IMR-90 (cell line): ENCODE measurements at regions of chr6 and their contacts with region 1.

Region 1: DNA sequence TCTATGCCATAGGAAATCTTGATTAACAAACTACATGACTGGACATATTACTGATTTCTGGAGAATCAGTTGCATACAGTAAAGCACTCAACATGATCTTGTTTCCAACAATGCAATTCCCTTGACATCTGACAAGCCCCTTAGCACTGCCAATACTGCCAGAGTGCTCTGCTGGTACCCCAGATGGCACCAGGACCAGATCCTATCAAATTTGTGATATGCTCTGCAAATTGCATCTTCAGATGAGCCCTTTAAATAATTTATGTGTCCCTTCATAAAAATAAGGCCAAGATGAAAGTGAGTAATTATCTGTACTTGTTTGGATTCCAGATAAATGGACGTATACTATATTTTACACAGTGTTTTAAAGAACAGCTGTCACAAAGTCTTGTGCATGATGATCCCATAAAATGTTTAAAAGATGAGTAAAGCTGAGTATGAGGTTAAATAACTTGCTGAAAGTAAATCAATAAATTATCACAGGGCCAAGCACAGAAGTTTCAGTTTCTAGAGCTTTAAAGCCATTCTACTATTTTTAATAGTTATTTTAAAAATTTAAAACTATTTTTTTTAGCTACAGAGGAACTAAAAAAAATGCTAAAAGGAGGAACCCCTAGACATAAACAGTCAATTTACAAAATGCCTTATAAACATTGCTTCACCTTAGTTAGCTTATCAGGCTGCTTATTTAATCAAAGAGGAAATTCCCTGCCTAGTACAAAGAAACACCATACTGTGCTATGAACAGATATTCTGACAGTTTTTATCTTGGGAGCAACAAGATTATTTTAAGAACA is 42.1 kb downstream of the NUDT3 start:
- DNase-seq: peak; percentile 31
- ATAC-seq: peak; percentile 49; the same call in 1 of the 2 replicates
- H3K4me3 ChIP-seq: no peak overlapping the region
- H3K27ac ChIP-seq: no peak overlapping the region
- H3K4me1 ChIP-seq: peaks cover 9% of the 10 kb centered on the region
- H3K27me3 ChIP-seq: no peaks in the 10 kb centered on the region
- CTCF ChIP-seq: no peak
- POLR2A ChIP-seq: no peak
- RAD21 ChIP-seq: no peak

Region 2: GRCh38 chr6:34305982-34306708 is 44.2 kb before region 1 on chr6:
- CTCF ChIA-PET with region 1: no interaction called
- POLR2A ChIA-PET with region 1: no interaction called
- dilution Hi-C with region 1: no loop called
- in situ Hi-C with region 1: no loop called
- intact Hi-C with region 1: loop called (anchors 5 kb)
- DNase-seq: peak; percentile 22
- ATAC-seq: peak; percentile 45
- H3K4me3 ChIP-seq: no peak overlapping the region
- H3K27ac ChIP-seq: no peak overlapping the region
- H3K4me1 ChIP-seq: peaks cover 6% of the 10 kb centered on the region
- H3K27me3 ChIP-seq: no peaks in the 10 kb centered on the region
- CTCF ChIP-seq: no peak
- POLR2A ChIP-seq: no peak
- RAD21 ChIP-seq: no peak

Region 3: DNA sequence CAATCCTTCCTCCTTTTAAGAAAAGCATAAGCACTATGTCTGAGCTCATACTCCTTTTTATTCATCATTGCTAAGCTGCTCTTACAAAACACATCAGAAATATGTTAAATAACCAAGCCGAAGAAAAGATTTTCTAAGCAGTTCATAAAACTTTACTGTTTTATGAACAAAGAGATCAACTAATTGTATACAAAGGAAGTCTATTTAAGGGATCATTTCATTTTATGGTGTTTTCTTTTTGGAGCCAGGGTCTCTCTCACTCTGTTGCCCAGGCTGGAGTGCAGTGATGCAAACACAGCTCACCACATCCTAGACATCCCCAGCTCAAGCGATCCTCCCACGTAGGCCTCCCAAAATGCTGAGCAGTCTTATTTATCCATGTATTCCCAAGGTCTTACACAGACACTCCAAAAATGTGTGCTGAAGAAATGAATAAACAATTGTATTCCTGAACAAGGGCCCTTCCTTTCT is 32.9 kb after region 1 on chr6:
- CTCF ChIA-PET with region 1: no interaction called
- POLR2A ChIA-PET with region 1: interaction called, 12 read pairs
- dilution Hi-C with region 1: no loop called
- in situ Hi-C with region 1: no loop called
- intact Hi-C with region 1: no loop called
- DNase-seq: peak; percentile 86
- ATAC-seq: peak; percentile 78
- H3K4me3 ChIP-seq: no peak overlapping the region
- H3K27ac ChIP-seq: peak overlapping the region; percentile 0; the same call in 1 of the 2 replicates
- H3K4me1 ChIP-seq: peaks cover 12% of the 10 kb centered on the region
- H3K27me3 ChIP-seq: no peaks in the 10 kb centered on the region
- CTCF ChIP-seq: no peak
- POLR2A ChIP-seq: no peak
- RAD21 ChIP-seq: no peak